T-cell (primary cell): ENCODE measurements at regions of chr5 and their contacts with region 1.

Region 1: DNA sequence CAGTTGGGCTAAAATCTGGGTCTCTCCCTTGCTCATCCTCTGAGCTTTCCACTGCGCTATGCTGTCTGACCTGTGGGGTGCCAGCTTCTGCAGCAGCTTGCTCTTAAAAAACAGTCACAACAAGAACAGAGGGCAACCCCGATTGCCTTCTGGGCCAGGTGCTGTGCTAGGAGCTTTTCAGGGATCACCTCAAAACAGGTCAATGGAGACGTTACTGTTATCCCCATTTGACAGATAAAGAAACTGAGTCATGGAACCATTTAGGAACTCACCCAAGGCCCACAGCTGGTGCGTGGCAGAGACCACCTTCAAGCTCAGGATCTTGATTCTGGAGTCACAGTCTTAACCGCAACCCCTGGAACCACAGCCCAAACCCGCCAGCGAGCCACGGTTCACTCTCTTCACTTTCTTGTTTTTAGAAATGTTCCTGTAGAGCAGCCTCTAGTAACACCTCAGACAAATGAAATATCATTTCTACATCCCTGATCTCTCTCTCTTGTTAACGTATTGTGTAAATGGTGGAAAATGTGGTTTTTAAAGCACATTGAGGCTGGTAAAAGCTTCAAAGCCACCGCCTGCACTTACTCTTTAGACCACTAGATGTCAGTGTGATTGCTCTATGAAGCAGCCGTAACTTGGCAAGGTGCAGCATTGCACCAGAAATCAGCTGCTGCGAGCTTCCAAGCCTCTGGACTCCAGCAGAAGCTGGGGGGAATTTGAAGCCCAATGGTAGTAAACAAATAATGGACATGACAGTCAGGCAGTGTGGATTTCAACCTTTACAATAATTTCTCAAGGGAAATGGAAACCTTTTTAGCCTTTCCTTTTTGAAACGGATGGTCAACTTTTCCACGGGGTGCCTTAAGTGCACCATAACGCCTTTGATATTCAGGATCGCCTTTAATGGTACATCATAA is 1.7 kb downstream of the FYB1 start:
- DNase-seq: peak in 34 of 35 experiments; percentile 41 to 92 (median 72)
- ATAC-seq: peak; percentile 76 to 82 (median 80)
- H3K4me3 ChIP-seq: peak overlapping the region; percentile 52 to 85
- H3K4me3 Mint-ChIP-seq: peak overlapping the region; percentile 65 to 82 (median 72)
- H3K27ac ChIP-seq: peak overlapping the region; percentile 87
- H3K27ac Mint-ChIP-seq: peak overlapping the region; percentile 93 to 98
- H3K4me1 ChIP-seq: peaks cover 48 to 64% of the 10 kb centered on the region in 2 experiments
- H3K4me1 Mint-ChIP-seq: peaks cover 75 to 81% (median 81%) of the 10 kb centered on the region in 3 donors
- H3K27me3 ChIP-seq: no peaks in the 10 kb centered on the region
- H3K27me3 Mint-ChIP-seq: no peaks in the 10 kb centered on the region

Region 2: GRCh38 chr5:39148983-39149534 is 68.6 kb before region 1 on chr5:
- CTCF ChIA-PET with region 1: interaction called, 9 to 16 read pairs
- POLR2A ChIA-PET with region 1: interaction called in 1 of 2 experiments, 3 read pairs
- DNase-seq: peak in 1 of 35 experiments; percentile 73
- ATAC-seq: peak; percentile 22 to 66 (median 47)
- H3K4me3 ChIP-seq: no peak overlapping the region
- H3K4me3 Mint-ChIP-seq: peak overlapping the region in 1 of 3 donors; percentile 51
- H3K27ac ChIP-seq: peak overlapping the region; percentile 49
- H3K27ac Mint-ChIP-seq: peak overlapping the region; percentile 90 to 94
- H3K4me1 ChIP-seq: peaks cover 46% of the 10 kb centered on the region in 2 experiments
- H3K4me1 Mint-ChIP-seq: peaks cover 78 to 84% (median 79%) of the 10 kb centered on the region in 3 donors
- H3K27me3 ChIP-seq: no peaks in the 10 kb centered on the region
- H3K27me3 Mint-ChIP-seq: no peaks in the 10 kb centered on the region

Region 3: GRCh38 chr5:39164529-39165402 is 52.9 kb before region 1 on chr5:
- CTCF ChIA-PET with region 1: interaction called in 1 of 2 experiments, 18 read pairs
- POLR2A ChIA-PET with region 1: interaction called in 1 of 2 experiments, 4 read pairs
- DNase-seq: peak in 1 of 35 experiments; percentile 66
- ATAC-seq: peak; percentile 66 to 85 (median 82)
- H3K4me3 ChIP-seq: no peak overlapping the region
- H3K4me3 Mint-ChIP-seq: peak overlapping the region; percentile 64 to 77 (median 68)
- H3K27ac ChIP-seq: peak overlapping the region; percentile 77
- H3K27ac Mint-ChIP-seq: peak overlapping the region; percentile 91 to 95
- H3K4me1 ChIP-seq: peaks cover 29 to 69% of the 10 kb centered on the region in 2 experiments
- H3K4me1 Mint-ChIP-seq: peaks cover 92 to 95% (median 93%) of the 10 kb centered on the region in 3 donors
- H3K27me3 ChIP-seq: no peaks in the 10 kb centered on the region
- H3K27me3 Mint-ChIP-seq: no peaks in the 10 kb centered on the region

Region 4: DNA sequence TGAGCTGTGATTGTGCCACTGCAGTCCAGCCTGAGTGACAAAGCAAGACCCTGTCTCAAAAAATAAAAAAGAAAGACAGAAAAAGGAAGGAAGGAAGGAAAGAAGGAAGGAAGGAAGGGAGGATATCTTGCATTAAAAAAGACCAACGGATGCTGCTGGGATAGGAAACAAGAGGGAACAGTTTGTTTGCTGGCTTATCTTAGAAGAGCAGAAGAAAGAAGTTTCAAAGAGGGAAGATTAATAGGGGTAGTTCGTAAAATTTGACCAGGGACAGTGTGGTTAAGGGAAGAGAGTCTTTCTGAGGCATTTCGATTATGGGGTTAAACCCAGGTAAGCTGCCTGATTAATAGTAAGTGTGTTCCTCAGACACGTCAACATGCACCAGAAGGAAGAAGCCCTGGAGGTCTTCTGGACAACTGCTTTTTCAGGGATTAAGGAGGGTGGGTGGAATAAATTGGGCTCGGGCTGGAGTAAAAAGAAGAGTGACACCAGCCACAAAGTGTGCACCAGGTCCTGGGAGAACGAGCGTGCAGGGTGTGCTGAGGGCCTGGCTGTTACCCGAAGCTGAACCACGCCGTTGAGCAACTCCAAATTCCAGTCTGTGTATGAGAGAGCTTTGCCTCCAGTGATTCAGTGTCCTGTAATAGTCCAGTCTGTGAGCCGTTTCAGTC is 23.0 kb before region 1 on chr5:
- CTCF ChIA-PET with region 1: interaction called, 10 to 67 read pairs
- POLR2A ChIA-PET with region 1: interaction called, 4 to 9 read pairs
- DNase-seq: no peak
- ATAC-seq: no peak
- H3K4me3 ChIP-seq: peak overlapping the region; percentile 74 to 78
- H3K4me3 Mint-ChIP-seq: peak overlapping the region; percentile 74 to 95 (median 74)
- H3K27ac ChIP-seq: peak overlapping the region; percentile 72
- H3K27ac Mint-ChIP-seq: peak overlapping the region; percentile 94 to 98
- H3K4me1 ChIP-seq: peaks cover 48 to 65% of the 10 kb centered on the region in 2 experiments
- H3K4me1 Mint-ChIP-seq: peaks cover 72 to 76% (median 75%) of the 10 kb centered on the region in 3 donors
- H3K27me3 ChIP-seq: no peaks in the 10 kb centered on the region
- H3K27me3 Mint-ChIP-seq: no peaks in the 10 kb centered on the region

Region 5: GRCh38 chr5:39231705-39232525 is 14.3 kb after region 1 on chr5:
- CTCF ChIA-PET with region 1: interaction called, 5 to 17 read pairs
- POLR2A ChIA-PET with region 1: interaction called in 1 of 2 experiments, 3 read pairs
- DNase-seq: no peak
- ATAC-seq: peak; percentile 24 to 90 (median 49)
- H3K4me3 ChIP-seq: no peak overlapping the region
- H3K4me3 Mint-ChIP-seq: no peak overlapping the region
- H3K27ac ChIP-seq: no peak overlapping the region
- H3K27ac Mint-ChIP-seq: peak overlapping the region; percentile 40 to 83
- H3K4me1 ChIP-seq: no peaks in the 10 kb centered on the region
- H3K4me1 Mint-ChIP-seq: peaks cover 14 to 20% (median 18%) of the 10 kb centered on the region in 3 donors
- H3K27me3 ChIP-seq: no peaks in the 10 kb centered on the region
- H3K27me3 Mint-ChIP-seq: no peaks in the 10 kb centered on the region

Region 6: GRCh38 chr5:39283231-39283818 is 65.7 kb after region 1 on chr5:
- CTCF ChIA-PET with region 1: interaction called, 62 to 84 read pairs
- POLR2A ChIA-PET with region 1: interaction called, 3 to 6 read pairs
- DNase-seq: peak in 34 of 35 experiments; percentile 6 to 90 (median 56)
- ATAC-seq: peak; percentile 95 to 100 (median 100)
- H3K4me3 ChIP-seq: no peak overlapping the region
- H3K4me3 Mint-ChIP-seq: peak overlapping the region in 1 of 3 donors; percentile 21
- H3K27ac ChIP-seq: no peak overlapping the region
- H3K27ac Mint-ChIP-seq: peak overlapping the region; percentile 68 to 78
- H3K4me1 ChIP-seq: peaks cover 4 to 6% of the 10 kb centered on the region in 2 experiments
- H3K4me1 Mint-ChIP-seq: peaks cover 38 to 46% (median 39%) of the 10 kb centered on the region in 3 donors
- H3K27me3 ChIP-seq: no peaks in the 10 kb centered on the region
- H3K27me3 Mint-ChIP-seq: peaks cover 0 to 5% of the 10 kb centered on the region in 2 donors

Region 7: DNA sequence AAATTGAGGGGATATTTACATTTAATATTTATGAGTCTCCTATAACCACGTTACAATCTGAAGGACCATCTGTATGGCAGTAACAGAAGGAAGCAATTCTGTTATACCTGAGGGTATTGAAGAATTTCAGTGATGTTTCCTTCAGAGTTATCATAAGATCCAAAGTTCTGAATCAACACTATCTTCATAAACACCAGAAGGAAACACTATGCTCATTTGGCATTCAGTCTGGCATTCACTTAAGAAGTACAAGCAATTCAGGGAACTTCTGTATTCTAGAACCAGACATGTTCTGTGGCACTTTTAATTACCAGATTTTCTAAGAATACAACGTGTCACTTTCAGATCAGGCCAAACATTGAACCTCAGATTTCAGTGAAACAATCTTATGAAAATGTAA is 197.6 kb after region 1 on chr5:
- CTCF ChIA-PET with region 1: no interaction called
- POLR2A ChIA-PET with region 1: no interaction called
- DNase-seq: no peak
- ATAC-seq: no peak
- H3K4me3 ChIP-seq: no peak overlapping the region
- H3K4me3 Mint-ChIP-seq: no peak overlapping the region
- H3K27ac ChIP-seq: no peak overlapping the region
- H3K27ac Mint-ChIP-seq: no peak overlapping the region
- H3K4me1 ChIP-seq: no peaks in the 10 kb centered on the region
- H3K4me1 Mint-ChIP-seq: no peaks in the 10 kb centered on the region
- H3K27me3 ChIP-seq: no peaks in the 10 kb centered on the region
- H3K27me3 Mint-ChIP-seq: peaks cover 0 to 4% of the 10 kb centered on the region in 2 donors

Region 8: GRCh38 chr5:39547553-39548154 is 330.0 kb after region 1 on chr5:
- CTCF ChIA-PET with region 1: interaction called, 4 to 19 read pairs
- POLR2A ChIA-PET with region 1: no interaction called
- DNase-seq: peak in 9 of 35 experiments; percentile 1 to 67 (median 12)
- ATAC-seq: peak in 2 of 4 experiments; percentile 35 to 47
- H3K4me3 ChIP-seq: no peak overlapping the region
- H3K4me3 Mint-ChIP-seq: peak overlapping the region in 1 of 3 donors; percentile 6
- H3K27ac ChIP-seq: no peak overlapping the region
- H3K27ac Mint-ChIP-seq: no peak overlapping the region
- H3K4me1 ChIP-seq: no peaks in the 10 kb centered on the region
- H3K4me1 Mint-ChIP-seq: peaks cover 3 to 8% (median 8%) of the 10 kb centered on the region in 3 donors
- H3K27me3 ChIP-seq: no peaks in the 10 kb centered on the region
- H3K27me3 Mint-ChIP-seq: peaks cover 2 to 6% of the 10 kb centered on the region in 2 donors

Region 9: DNA sequence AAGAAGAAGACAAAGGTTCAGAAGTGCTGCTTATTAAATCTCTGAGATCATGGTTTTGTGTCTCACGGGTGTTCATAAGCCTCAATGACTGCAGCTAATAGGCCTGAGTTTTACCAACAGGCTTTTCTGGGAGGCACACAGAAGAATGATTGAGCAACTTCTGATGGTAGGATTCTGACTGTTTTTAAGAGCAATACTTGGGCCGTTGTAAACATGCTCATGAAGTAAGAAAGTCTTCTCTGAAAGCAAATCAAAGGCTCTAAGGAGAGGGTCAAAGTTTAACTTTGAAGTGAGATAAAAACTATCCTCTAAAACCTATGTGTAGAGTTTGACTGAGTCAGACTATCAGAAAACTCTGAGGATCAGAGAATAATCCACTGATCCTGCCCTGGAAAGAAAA is 598.1 kb after region 1 on chr5:
- CTCF ChIA-PET with region 1: no interaction called
- POLR2A ChIA-PET with region 1: no interaction called
- DNase-seq: no peak
- ATAC-seq: no peak
- H3K4me3 ChIP-seq: no peak overlapping the region
- H3K4me3 Mint-ChIP-seq: no peak overlapping the region
- H3K27ac ChIP-seq: no peak overlapping the region
- H3K27ac Mint-ChIP-seq: no peak overlapping the region
- H3K4me1 ChIP-seq: no peaks in the 10 kb centered on the region
- H3K4me1 Mint-ChIP-seq: no peaks in the 10 kb centered on the region
- H3K27me3 ChIP-seq: no peaks in the 10 kb centered on the region
- H3K27me3 Mint-ChIP-seq: peaks cover 15 to 25% of the 10 kb centered on the region in 2 donors